GM12878 (cell line): ENCODE measurements at regions of chr3 and their contacts with region 1.

Region 1: GRCh38 chr3:69033470-69033869 is 18.7 kb downstream of the TMF1 start:
- DNase-seq: no peak
- ATAC-seq: no peak
- H3K4me3 ChIP-seq: no peak overlapping the region
- H3K27ac ChIP-seq: no peak overlapping the region
- H3K4me1 ChIP-seq: no peaks in the 10 kb centered on the region
- H3K27me3 ChIP-seq: no peaks in the 10 kb centered on the region
- CTCF ChIP-seq: no peak
- EP300 ChIP-seq: no peak
- POLR2A ChIP-seq: no peak
- RAD21 ChIP-seq: no peak

Region 2: GRCh38 chr3:69044608-69045007 is 11.1 kb after region 1 on chr3:
- CTCF ChIA-PET with region 1: no interaction called
- POLR2A ChIA-PET with region 1: no interaction called
- RAD21 ChIA-PET with region 1: no interaction called
- SMC1A ChIA-PET with region 1: interaction called, 12 read pairs
- in situ Hi-C with region 1: no loop called
- intact Hi-C with region 1: no loop called
- DNase-seq: no peak
- ATAC-seq: no peak
- H3K4me3 ChIP-seq: no peak overlapping the region
- H3K27ac ChIP-seq: no peak overlapping the region
- H3K4me1 ChIP-seq: no peaks in the 10 kb centered on the region
- H3K27me3 ChIP-seq: no peaks in the 10 kb centered on the region
- CTCF ChIP-seq: no peak
- EP300 ChIP-seq: no peak
- POLR2A ChIP-seq: no peak
- RAD21 ChIP-seq: no peak